ENCODE measurements at regions of chr1 and their contacts with region 1.

Region 1: GRCh38 chr1:44609412-44609767 is 64.9 kb downstream of the TMEM53 start:
- DNase-seq: no peak
- H3K4me3 ChIP-seq: no peak overlapping the region
- H3K4me3 Mint-ChIP-seq: no peak overlapping the region
- H3K27ac ChIP-seq: no peak overlapping the region
- H3K27ac Mint-ChIP-seq: no peak overlapping the region
- H3K4me1 ChIP-seq: no peaks in the 10 kb centered on the region
- H3K4me1 Mint-ChIP-seq: no peaks in the 10 kb centered on the region
- H3K27me3 ChIP-seq: no peaks in the 10 kb centered on the region
- H3K27me3 Mint-ChIP-seq: peaks cover 7 to 10% of the 10 kb centered on the region in 2 donors

Region 2: DNA sequence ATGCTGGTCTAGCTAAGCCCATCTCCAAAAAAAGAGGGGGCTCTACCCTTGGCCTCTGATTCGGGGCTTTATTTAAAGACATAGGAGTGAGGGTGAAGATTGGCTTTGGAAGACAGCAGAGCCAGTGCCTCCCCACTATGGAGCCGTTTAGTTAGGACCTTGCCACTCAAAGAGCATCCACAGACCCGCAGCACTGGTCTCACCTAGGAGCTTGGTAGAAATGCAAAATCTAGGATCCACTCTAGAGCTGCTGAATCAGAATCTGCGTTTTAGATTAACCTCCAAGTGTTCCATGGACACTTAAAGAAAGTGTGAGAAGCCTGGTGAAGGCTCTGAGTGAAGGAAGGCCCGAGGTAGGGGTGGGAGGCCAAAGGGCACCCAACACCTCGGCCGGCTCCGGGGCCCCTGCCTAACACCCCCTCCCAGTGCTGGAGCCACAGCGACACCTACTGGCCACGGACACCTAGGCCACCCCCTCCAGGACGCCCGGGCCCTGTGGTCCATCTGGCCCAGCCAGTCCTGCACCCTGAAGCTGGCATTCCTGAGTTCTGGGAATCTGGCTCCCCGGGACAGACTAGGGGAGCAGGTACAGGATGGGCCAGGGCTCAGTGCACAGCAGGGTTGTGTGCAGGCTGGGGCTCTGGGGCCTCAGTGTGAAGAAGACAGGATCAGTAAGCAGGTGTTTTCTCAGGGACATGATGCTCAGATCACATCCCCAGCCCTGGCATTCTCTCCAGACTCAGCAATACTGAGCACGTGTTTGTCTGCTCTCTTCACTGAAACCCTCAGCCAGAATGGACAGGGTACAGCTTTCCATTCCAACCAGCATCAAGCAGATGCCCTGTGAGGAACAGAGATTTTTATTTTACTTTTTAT is 14.3 kb before region 1 on chr1:
- CTCF ChIA-PET with region 1: interaction called, 11 read pairs
- POLR2A ChIA-PET with region 1: no interaction called
- intact Hi-C with region 1: no loop called
- DNase-seq: peak; percentile 51 to 64 (median 57)
- H3K4me3 ChIP-seq: no peak overlapping the region
- H3K4me3 Mint-ChIP-seq: no peak overlapping the region
- H3K27ac ChIP-seq: no peak overlapping the region
- H3K27ac Mint-ChIP-seq: no peak overlapping the region
- H3K4me1 ChIP-seq: no peaks in the 10 kb centered on the region
- H3K4me1 Mint-ChIP-seq: no peaks in the 10 kb centered on the region
- H3K27me3 ChIP-seq: peaks cover 3% of the 10 kb centered on the region
- H3K27me3 Mint-ChIP-seq: peaks cover 7 to 8% of the 10 kb centered on the region in 2 donors

Region 3: GRCh38 chr1:44985747-44986359 is 376.5 kb after region 1 on chr1:
- CTCF ChIA-PET with region 1: no interaction called
- POLR2A ChIA-PET with region 1: no interaction called
- intact Hi-C with region 1: no loop called
- DNase-seq: no peak
- H3K4me3 ChIP-seq: peak overlapping the region; percentile 67 to 70
- H3K4me3 Mint-ChIP-seq: peak overlapping the region; percentile 98 to 100 (median 99)
- H3K27ac ChIP-seq: peak overlapping the region; percentile 59
- H3K27ac Mint-ChIP-seq: peak overlapping the region; percentile 34 to 99 (median 96)
- H3K4me1 ChIP-seq: peaks cover 11% of the 10 kb centered on the region
- H3K4me1 Mint-ChIP-seq: peaks cover 15 to 26% (median 21%) of the 10 kb centered on the region in 4 donors
- H3K27me3 ChIP-seq: no peaks in the 10 kb centered on the region
- H3K27me3 Mint-ChIP-seq: no peaks in the 10 kb centered on the region

Measured in CD4-positive, alpha-beta memory T cell (primary cell).